ENCODE measurements at regions of chr1 and their contacts with region 1.

Region 1: DNA sequence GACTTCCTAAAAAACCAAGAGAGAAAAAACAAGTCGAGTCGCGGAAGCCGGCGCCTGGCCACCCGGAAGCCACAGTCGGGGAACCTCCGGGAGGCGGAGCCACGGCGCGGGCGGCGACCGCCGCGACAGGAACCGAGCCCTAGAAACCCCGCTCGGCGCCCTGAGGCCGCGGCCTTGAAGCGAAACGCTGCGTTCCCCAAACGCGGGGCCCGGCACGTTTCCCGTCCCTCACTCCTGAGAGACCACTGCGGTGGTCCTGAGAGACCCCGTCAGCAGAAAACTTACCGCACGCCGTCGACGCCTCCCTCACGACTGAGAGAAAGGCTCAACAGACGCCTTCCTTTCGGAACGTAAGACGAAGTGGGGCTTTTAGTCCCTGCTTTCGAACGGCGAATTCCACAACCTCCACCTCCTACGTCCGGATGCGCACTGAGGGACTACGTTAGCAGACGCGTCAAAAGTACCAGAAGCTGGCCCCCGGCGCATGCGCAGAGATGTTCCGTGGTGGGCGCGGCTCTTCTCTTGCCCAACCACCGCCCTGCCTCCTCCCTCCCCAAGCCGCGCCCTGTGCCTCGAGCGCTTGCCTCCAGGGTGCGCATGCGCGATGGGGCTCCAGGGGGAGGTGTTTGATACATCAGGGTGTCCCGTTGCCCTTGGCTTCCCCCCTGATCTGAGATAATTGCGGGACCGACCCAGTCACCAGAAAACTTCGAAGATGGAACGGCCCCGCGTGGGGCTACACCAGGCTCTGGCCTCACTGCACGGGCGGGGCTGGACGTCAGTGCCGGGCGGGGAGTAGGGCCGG is at the start of gene RSRP1:
- DNase-seq: peak; percentile 97 to 99
- H3K4me3 ChIP-seq: peak within 1 kb of the TSS; percentile 78 to 97 (median 85)
- H3K27ac ChIP-seq: peak within 1 kb of the TSS; percentile 98 to 99
- H3K4me1 ChIP-seq: peaks cover 0 to 18% of the 10 kb centered on the region in 2 donors
- H3K27me3 ChIP-seq: no peaks in the 10 kb centered on the region
- CTCF ChIP-seq: peak in 2 of 3 donors; percentile 8 to 24
- POLR2A ChIP-seq: peak; percentile 99
- total RNA-seq, gene RSRP1: 155 to 215 (median 164) TPM

Region 2: DNA sequence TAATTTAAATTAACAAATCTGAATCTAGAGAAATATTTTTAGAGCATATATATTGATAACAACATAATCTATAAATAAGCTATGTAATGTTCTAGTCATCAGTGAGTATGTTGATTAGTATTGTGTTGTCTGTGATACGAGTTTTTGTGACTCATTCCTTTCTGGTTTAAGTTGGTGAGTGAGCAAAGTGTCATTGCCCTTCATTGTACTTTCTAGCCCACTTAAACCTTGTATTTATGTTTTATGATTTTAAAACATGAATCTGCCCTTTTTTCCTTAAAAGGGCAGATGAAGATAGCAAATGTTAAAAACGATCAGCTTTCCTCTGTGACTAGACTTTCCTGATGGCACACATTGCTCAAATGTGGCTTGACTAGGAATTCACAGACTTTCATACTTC is 222.0 kb after region 1 on chr1:
- intact Hi-C with region 1: no loop called
- DNase-seq: no peak
- H3K4me3 ChIP-seq: no peak overlapping the region
- H3K27ac ChIP-seq: no peak overlapping the region
- H3K4me1 ChIP-seq: no peaks in the 10 kb centered on the region
- H3K27me3 ChIP-seq: no peaks in the 10 kb centered on the region
- CTCF ChIP-seq: no peak
- POLR2A ChIP-seq: no peak

Region 3: GRCh38 chr1:25832336-25833037 is 585.3 kb after region 1 on chr1:
- intact Hi-C with region 1: loop called (anchors 5 kb)
- DNase-seq: no peak
- H3K4me3 ChIP-seq: no peak overlapping the region
- H3K27ac ChIP-seq: no peak overlapping the region
- H3K4me1 ChIP-seq: no peaks in the 10 kb centered on the region
- H3K27me3 ChIP-seq: no peaks in the 10 kb centered on the region
- CTCF ChIP-seq: no peak
- POLR2A ChIP-seq: no peak

Measured in breast epithelium (tissue), 4 donors.